ENCODE measurements at regions of chr14 and their contacts with region 1.

Region 1: DNA sequence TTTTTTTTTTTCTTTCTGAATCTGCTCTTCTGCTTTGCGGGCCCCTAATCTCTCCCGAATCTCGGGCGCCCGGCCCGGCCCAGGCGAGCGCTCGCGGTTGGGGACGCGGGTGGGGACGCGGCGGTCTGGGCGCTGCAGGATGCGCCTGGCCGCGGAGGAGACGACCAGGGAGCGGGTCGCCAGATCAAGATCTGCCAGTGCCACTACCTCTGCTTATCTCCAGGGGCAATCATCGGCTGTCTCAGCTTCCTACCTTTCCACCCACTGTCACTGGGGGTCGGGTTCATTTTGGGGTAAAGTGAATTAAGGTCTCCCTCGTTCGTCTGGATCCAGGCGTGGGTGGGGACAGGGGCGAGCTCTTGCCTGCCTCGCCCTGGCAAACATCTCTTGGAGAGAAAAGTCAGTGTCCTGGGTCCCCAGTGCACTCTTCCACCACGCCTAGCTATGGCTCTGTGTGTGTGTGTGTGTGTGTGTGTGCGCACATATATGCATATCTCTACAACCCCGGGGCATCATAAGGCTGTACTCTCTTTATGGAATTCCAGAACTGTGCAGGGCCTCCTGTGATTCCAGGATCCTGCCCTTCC is 422.3 kb downstream of the VRK1 start:
- DNase-seq: no peak
- ATAC-seq: no peak
- H3K4me3 ChIP-seq: peak overlapping the region in 7 of 10 donors; percentile 12 to 50 (median 45)
- H3K27ac ChIP-seq: no peak overlapping the region
- H3K4me1 ChIP-seq: peaks cover 4 to 15% (median 10%) of the 10 kb centered on the region in 9 donors
- H3K27me3 ChIP-seq: peaks cover 0 to 59% (median 43%) of the 10 kb centered on the region in 7 donors
- CTCF ChIP-seq: no peak

Region 2: GRCh38 chr14:95943699-95944098 is 1275.8 kb before region 1 on chr14:
- intact Hi-C with region 1: loop called in 1 of 10 experiments (anchors 5 kb)
- DNase-seq: no peak
- ATAC-seq: no peak
- H3K4me3 ChIP-seq: no peak overlapping the region
- H3K27ac ChIP-seq: no peak overlapping the region
- H3K4me1 ChIP-seq: no peaks in the 10 kb centered on the region
- H3K27me3 ChIP-seq: peaks cover 0 to 23% (median 10%) of the 10 kb centered on the region in 7 donors
- CTCF ChIP-seq: no peak

Region 3: GRCh38 chr14:97276573-97276972 is 57.0 kb after region 1 on chr14:
- intact Hi-C with region 1: no loop called
- DNase-seq: no peak
- ATAC-seq: no peak
- H3K4me3 ChIP-seq: no peak overlapping the region
- H3K27ac ChIP-seq: no peak overlapping the region
- H3K4me1 ChIP-seq: no peaks in the 10 kb centered on the region
- H3K27me3 ChIP-seq: peaks cover 0 to 28% (median 10%) of the 10 kb centered on the region in 7 donors
- CTCF ChIP-seq: no peak

Measured in heart right ventricle (tissue), 16 donors.